PC-9 (cell line): ENCODE measurements at regions of chr21 and their contacts with region 1.

Region 1: GRCh38 chr21:28696844-28697410 is 295.8 kb downstream of the LTN1 start:
- DNase-seq: no peak
- H3K4me3 ChIP-seq: no peak overlapping the region
- H3K27ac ChIP-seq: no peak overlapping the region
- H3K4me1 ChIP-seq: no peaks in the 10 kb centered on the region
- H3K27me3 ChIP-seq: no peaks in the 10 kb centered on the region
- CTCF ChIP-seq: no peak

Region 2: DNA sequence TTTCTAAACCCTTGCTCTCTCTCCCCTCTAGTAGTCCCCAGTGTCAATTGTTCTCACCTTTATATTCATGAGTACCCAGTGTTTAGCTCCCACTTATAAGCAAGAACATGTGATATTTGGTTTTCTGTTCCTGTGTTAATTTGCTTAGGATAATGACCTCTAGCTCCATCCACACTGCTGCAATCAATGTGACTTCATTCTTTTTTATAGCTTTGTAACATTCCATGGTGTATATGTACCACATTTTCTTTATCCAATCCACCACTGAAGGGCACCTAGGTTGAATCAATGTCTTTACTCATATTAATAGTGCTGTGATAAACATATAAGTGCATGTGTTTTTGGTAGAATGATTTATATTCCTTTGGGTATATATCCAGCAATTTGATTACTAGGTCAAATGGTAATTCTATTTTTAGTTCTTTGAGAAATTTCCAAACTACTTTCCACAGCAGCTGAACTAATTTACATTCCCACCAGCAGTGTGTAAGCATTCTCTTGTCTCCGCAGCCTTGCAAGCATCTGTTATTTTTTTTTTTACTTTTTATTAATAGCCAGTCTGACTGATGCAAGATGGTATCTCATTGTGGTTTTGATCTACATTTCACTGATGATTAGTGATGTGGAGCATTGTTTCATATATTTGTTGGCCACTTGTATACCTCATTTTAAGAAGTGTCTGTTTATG is 18.0 kb after region 1 on chr21:
- CTCF ChIA-PET with region 1: no interaction called
- POLR2A ChIA-PET with region 1: interaction called, 36 read pairs
- intact Hi-C with region 1: no loop called
- DNase-seq: no peak
- H3K4me3 ChIP-seq: no peak overlapping the region
- H3K27ac ChIP-seq: no peak overlapping the region
- H3K4me1 ChIP-seq: no peaks in the 10 kb centered on the region
- H3K27me3 ChIP-seq: no peaks in the 10 kb centered on the region
- CTCF ChIP-seq: no peak